ENCODE measurements at regions of chr5 and their contacts with region 1.

Region 1: GRCh38 chr5:174951146-174951780 is 226.9 kb downstream of the MSX2 start:
- DNase-seq: peak; percentile 35 to 48
- H3K4me3 ChIP-seq: no peak overlapping the region
- H3K27ac ChIP-seq: no peak overlapping the region
- H3K4me1 ChIP-seq: no peaks in the 10 kb centered on the region
- H3K27me3 ChIP-seq: peaks cover 34% of the 10 kb centered on the region; the same call in 1 of the 2 replicates
- CTCF ChIP-seq: peak; percentile 85

Region 2: DNA sequence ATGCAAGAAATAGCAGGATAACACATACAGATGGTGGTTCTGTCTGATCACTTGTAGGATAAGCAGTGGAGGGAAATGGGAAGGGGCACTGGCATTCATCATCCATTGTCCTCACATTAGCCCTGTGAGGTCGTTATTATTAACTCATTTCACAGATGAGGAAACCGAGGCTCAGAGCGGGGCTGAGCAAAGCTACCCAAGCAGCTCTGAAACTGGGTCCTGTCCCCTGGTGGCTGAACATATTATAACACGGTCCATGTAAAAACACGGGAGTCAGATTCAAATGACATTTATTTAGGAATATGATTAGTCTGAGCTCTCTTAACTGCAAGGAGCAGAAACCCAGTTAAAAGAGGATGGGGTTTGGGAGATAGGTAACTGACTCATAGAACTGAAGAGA is 749.7 kb after region 1 on chr5:
- CTCF ChIA-PET with region 1: no interaction called
- POLR2A ChIA-PET with region 1: no interaction called
- intact Hi-C with region 1: loop called (anchors 10 kb)
- DNase-seq: no peak
- H3K4me3 ChIP-seq: no peak overlapping the region
- H3K27ac ChIP-seq: no peak overlapping the region
- H3K4me1 ChIP-seq: no peaks in the 10 kb centered on the region
- H3K27me3 ChIP-seq: peaks cover 91% of the 10 kb centered on the region
- CTCF ChIP-seq: peak; percentile 54; the same call in 1 of the 2 replicates